Sigmoid colon (tissue), 7 donors: ENCODE measurements at regions of chr17 and their contacts with region 1.

Region 1: DNA sequence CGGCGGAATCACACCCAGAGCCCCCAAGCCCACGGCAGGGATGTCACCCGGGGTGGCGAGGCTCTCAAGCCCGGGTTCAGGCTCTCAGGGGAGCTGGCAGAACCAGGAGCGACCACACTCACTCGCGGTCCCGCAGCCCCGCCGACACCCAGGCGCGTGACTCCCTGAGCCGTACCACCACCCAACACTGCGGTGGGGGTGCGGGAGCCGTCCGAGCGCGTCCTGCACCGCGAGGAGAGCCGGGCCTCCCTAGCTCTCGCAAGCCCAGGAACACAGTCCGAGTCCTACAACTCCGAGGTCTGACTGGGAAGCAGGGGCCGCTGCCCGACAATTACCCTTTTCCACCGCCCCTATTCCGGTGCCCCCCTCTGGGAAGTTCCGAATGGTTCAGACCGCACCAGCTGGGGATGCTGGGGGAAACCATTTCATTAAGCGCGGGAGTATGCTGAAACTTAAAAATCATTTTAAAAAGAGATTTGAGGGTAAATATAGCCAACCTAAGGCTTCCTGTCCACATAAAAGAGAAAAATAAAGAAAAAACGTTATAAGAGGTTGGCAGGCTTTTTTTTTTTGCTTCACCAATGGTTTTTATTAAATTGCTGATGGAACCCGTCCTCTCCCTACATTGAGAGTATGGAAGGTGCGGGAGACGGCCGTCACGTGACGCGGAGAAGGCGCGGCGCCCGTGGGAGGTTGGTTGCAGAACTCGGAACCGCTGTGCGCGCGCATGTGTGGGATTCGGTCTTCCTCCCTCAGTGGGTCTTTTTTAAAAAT is at the start of gene FLCN:
- DNase-seq: peak; percentile 96
- H3K4me3 ChIP-seq: peak within 1 kb of the TSS; percentile 95 to 100 (median 100)
- H3K27ac ChIP-seq: peak within 1 kb of the TSS; percentile 94 to 98 (median 94)
- H3K4me1 ChIP-seq: peaks cover 0 to 36% (median 29%) of the 10 kb centered on the region in 4 donors
- H3K27me3 ChIP-seq: no peaks in the 10 kb centered on the region
- CTCF ChIP-seq: no peak
- EP300 ChIP-seq: peak in 1 of 4 donors; percentile 4
- POLR2A ChIP-seq: peak; percentile 79 to 80
- total RNA-seq, gene FLCN: 41.5 to 122 (median 78.7) TPM

Region 2: DNA sequence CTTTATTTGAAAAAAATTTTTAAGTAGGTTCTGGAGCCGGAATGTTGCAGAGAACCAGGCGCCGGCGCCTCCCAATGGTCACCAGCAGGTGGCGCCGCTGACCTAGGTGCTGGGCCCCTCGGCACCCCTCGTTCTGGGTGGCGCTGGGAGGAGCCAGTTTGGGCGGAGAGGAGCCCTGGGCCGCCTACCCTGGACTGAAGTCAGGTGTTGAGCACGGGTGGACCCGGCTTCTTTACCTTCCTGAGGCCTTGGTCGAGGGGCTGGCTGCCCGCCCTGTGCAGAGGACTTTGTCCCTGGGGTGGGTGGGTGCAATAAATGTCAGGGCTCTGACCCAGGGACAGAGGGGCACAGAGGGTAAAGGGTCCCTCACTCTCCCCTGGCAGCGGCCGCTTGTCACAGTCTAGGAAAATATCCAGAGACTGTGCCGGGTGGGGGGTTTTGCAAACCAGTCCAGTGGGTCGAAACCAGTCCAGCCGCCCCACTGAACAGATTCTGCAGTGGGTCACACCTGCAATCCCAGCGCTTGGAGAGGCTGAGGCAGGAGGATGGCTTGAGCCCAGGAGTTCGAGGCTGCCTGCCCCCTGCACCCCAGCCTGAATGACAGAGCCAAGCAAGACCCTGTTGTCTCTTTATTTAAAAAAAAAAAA is 235.2 kb before region 1 on chr17:
- intact Hi-C with region 1: loop called (anchors 5 kb)
- DNase-seq: peak; percentile 89
- H3K4me3 ChIP-seq: no peak overlapping the region
- H3K27ac ChIP-seq: no peak overlapping the region
- H3K4me1 ChIP-seq: peaks cover 0 to 10% (median 7%) of the 10 kb centered on the region in 4 donors
- H3K27me3 ChIP-seq: no peaks in the 10 kb centered on the region
- CTCF ChIP-seq: peak; percentile 76 to 96 (median 90)
- EP300 ChIP-seq: no peak
- POLR2A ChIP-seq: no peak

Region 3: GRCh38 chr17:17041571-17042380 is 195.4 kb before region 1 on chr17:
- intact Hi-C with region 1: loop called (anchors 1 kb)
- DNase-seq: peak; percentile 99
- H3K4me3 ChIP-seq: peak overlapping the region; percentile 30 to 79 (median 76)
- H3K27ac ChIP-seq: peak overlapping the region; percentile 74 to 83 (median 76)
- H3K4me1 ChIP-seq: peaks cover 0 to 48% (median 44%) of the 10 kb centered on the region in 4 donors
- H3K27me3 ChIP-seq: no peaks in the 10 kb centered on the region
- CTCF ChIP-seq: no peak
- EP300 ChIP-seq: no peak
- POLR2A ChIP-seq: no peak

Region 4: DNA sequence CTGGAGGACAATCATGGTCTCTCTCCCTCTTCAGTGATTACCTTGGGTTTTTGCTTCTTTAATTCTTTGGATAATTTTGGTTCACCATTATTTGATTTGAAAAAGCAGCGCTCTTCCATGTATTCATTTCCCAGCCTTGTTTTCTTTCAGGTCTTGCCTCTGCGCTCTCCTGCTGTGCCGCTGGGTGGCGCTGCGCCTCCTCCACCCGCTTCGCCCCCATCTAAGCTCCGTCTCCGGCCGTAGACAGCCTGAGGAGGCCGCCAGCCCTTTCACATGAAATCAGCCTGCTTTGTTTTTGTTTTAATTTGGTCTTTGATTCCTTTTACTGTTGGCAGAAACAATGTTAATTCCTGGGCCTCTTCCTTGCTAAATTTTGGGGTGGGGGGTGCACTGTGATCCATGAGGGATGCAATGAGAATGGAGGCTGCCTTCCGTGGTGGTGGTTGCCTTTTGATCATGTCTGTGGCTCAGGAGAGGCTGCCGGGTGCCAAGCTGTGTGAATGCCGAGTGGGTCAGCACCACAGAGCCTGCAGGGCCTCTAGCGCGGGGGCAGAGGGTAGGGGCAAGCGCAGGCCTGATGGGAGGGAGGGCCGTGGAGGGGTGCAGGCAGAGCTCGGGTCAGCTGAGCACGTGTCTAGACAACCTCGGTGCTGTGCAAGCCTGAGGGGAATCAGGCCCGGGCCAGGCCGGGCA is 95.2 kb before region 1 on chr17:
- intact Hi-C with region 1: loop called (anchors 2 kb)
- DNase-seq: peak; percentile 78
- H3K4me3 ChIP-seq: no peak overlapping the region
- H3K27ac ChIP-seq: peak overlapping the region in 2 of 4 donors; percentile 40 to 61
- H3K4me1 ChIP-seq: peaks cover 0 to 13% (median 9%) of the 10 kb centered on the region in 4 donors
- H3K27me3 ChIP-seq: no peaks in the 10 kb centered on the region
- CTCF ChIP-seq: peak; percentile 78 to 89 (median 86)
- EP300 ChIP-seq: no peak
- POLR2A ChIP-seq: no peak

Region 5: DNA sequence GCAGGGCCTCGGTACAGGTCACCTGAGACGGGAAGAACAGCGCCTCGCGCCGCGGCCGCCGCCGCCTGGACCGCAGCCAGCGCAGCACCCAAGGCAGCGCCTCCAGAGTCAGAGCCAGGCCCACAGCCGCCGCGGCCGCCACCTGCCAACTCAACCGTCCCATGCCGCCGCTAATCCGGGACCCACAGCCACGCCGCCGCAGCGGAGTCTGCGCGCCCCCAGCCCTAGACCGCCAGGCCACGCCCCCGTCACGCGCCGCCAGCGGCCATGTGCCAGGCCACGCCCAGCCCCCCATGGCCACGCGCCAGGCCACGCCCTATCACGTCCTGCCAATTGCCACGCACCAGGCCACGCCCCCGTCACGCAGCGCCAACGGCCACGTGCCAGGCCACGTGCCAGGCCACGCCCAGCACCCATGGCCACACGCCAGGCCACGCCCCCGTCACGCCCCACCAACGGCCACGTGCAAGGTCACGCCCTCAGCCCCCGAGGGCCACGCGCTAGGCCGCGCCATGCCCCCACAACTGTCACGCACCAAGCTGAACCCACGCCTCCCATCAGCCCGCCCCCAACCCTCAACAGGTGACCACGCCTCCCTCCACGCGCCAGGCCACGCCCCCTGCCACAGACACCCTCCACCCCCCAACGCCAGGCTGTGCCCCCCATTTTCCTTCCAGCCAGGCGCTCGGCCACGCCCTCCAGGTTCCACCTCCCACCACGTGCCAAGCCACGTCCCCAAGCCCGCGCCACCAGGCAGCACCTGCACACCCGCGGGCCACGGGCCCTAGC is 30.9 kb before region 1 on chr17 and contains the start of gene PLD6:
- intact Hi-C with region 1: loop called (anchors 2 kb)
- DNase-seq: peak; percentile 94
- H3K4me3 ChIP-seq: peak within 1 kb of the TSS; percentile 47 to 68 (median 54)
- H3K27ac ChIP-seq: peak within 1 kb of the TSS; percentile 86 to 98 (median 94)
- H3K4me1 ChIP-seq: peaks cover 0 to 60% (median 59%) of the 10 kb centered on the region in 4 donors
- H3K27me3 ChIP-seq: no peaks in the 10 kb centered on the region
- CTCF ChIP-seq: no peak
- EP300 ChIP-seq: peak in 1 of 4 donors; percentile 17
- POLR2A ChIP-seq: peak in 1 of 2 donors; percentile 28
- total RNA-seq, gene PLD6: 7.7 to 15.3 (median 10.2) TPM

Region 6: DNA sequence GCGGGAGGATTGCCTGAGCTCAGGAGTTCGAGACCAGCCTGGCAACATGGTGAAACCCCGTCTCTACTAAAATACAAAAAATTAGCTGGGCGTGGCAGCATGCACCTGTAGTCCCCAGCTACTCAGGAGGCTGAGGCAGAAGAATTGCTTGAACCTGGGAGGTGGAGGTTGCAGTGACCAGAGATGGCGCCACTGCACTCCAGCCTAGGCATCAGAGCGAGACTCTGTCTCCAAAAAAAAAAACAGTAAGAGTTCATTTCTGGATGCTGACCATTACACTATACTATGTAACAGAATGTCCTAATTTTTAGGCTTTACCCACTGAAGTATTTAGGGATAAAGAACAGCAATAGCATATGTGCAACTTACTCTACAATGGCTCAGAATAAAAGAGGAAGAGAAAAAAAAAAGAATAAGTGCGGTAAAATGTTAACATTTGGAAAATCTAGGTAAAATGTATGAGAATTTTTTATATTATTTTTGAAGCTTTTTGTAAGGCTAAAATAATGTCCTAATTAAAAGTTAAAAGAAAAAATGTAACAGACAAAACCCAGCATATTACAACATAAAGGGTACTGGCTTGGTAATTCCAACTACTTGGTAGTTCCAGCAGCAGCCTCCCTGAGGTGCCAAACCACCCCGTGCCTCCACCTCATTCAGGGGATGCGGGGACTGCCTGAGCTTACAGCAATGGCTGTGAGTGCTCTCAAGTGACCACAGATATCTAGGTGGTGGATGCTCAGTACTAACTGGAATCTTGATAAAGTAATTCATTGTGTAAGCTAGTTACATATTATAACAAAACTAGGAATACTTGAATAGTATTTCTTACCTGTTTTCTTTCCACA is 32.9 kb after region 1 on chr17:
- intact Hi-C with region 1: no loop called
- DNase-seq: no peak
- H3K4me3 ChIP-seq: no peak overlapping the region
- H3K27ac ChIP-seq: no peak overlapping the region
- H3K4me1 ChIP-seq: no peaks in the 10 kb centered on the region
- H3K27me3 ChIP-seq: no peaks in the 10 kb centered on the region
- CTCF ChIP-seq: no peak
- EP300 ChIP-seq: no peak
- POLR2A ChIP-seq: no peak

Region 7: GRCh38 chr17:17280613-17281549 is 43.7 kb after region 1 on chr17 and contains the start of gene COPS3:
- intact Hi-C with region 1: loop called (anchors 2 kb)
- DNase-seq: peak; percentile 99
- H3K4me3 ChIP-seq: peak within 1 kb of the TSS; percentile 79 to 96 (median 95)
- H3K27ac ChIP-seq: peak within 1 kb of the TSS; percentile 96 to 99 (median 98)
- H3K4me1 ChIP-seq: peaks cover 0 to 44% (median 40%) of the 10 kb centered on the region in 4 donors
- H3K27me3 ChIP-seq: no peaks in the 10 kb centered on the region
- CTCF ChIP-seq: no peak
- EP300 ChIP-seq: no peak
- POLR2A ChIP-seq: peak; percentile 61 to 63
- total RNA-seq, gene COPS3: 56.8 to 105 (median 72.7) TPM

Region 8: DNA sequence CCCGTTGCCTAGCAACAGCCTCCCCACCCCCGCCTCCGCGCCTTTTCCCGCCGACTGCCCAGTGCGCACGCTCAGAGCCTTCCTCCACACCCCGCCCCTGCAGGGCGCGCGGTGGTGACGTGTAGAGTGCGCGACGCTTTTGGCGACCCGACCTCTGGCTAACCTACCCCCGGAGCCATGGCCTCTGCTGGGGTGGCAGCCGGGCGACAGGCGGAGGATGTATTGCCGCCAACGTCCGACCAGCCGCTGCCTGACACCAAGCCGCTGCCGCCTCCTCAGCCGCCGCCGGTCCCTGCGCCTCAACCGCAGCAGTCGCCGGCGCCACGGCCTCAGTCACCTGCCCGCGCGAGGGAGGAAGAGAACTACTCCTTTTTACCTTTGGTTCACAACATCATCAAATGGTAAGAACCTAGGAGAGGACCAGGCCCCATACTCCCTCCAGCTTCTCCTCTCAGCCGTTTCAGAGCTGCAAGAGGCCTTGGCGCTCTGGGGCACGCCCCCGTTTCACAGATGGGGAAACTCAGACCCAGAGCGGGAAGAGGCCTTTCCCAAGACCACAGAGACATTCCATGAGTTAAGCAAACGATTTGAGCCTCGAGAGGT is 239.8 kb after region 1 on chr17 and contains the start of gene MED9:
- intact Hi-C with region 1: no loop called
- DNase-seq: peak; percentile 96
- H3K4me3 ChIP-seq: peak within 1 kb of the TSS; percentile 78 to 100 (median 98)
- H3K27ac ChIP-seq: peak within 1 kb of the TSS; percentile 90 to 95 (median 91)
- H3K4me1 ChIP-seq: peaks cover 0 to 46% (median 28%) of the 10 kb centered on the region in 4 donors
- H3K27me3 ChIP-seq: no peaks in the 10 kb centered on the region
- CTCF ChIP-seq: no peak
- EP300 ChIP-seq: peak in 1 of 4 donors; percentile 46
- POLR2A ChIP-seq: peak; percentile 16 to 57
- total RNA-seq, gene MED9: 9.7 to 15.3 (median 13.7) TPM